ENCODE measurements at regions of chr15 and their contacts with region 1.

Region 1: DNA sequence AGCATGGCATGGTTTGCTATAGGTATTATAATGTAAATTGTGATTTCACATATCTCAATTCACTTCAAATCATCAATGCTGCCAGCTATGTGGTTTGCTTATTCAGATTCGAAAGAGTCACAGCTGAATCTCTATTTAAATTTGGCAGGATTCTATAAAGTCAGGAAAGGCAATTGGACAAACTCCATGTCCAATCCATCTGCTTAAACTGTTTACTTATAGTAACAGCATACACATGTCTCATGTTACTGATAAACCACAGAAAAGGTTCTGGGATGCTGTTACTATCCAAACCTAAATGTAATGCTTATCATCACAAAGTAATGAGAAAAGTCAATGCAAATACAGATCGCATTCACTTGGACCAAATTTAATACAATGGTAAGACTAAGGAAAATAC is 229.7 kb downstream of the ISL2 start:
- DNase-seq: no peak
- ATAC-seq: no peak
- H3K4me3 ChIP-seq: no peak overlapping the region
- H3K4me3 Mint-ChIP-seq: no peak overlapping the region
- H3K27ac ChIP-seq: no peak overlapping the region
- H3K27ac Mint-ChIP-seq: no peak overlapping the region
- H3K4me1 ChIP-seq: no peaks in the 10 kb centered on the region
- H3K4me1 Mint-ChIP-seq: no peaks in the 10 kb centered on the region
- H3K27me3 ChIP-seq: no peaks in the 10 kb centered on the region
- H3K27me3 Mint-ChIP-seq: no peaks in the 10 kb centered on the region

Region 2: DNA sequence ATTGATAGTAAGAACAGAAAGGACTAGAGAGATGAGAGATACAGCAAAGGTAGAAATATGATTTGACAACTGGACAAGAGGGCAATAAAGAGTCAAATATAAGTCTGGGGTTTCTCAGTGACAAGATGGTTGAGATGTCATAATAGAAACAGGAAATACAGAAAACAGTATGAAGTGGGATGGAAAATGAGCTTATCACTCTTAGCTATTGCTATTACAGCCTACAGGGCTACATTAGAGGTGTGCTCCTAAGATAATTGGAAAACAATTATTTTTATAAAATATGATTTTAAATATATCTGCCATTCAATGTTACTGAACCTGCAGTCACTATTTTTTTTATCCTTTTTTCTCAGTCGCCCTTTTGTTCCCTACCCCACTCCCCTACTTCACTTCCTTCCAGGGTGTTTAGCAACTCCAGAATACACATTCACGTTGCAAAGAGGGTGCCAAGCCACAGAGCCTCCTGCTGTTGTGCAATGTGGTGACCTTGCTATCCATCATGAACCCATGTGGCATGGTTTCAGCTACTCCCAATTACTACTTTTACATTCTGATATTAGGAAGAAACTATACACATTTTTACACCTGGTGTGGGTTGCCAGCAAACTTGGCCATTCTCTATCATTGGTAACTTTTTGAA is 560.0 kb before region 1 on chr15:
- CTCF ChIA-PET with region 1: no interaction called
- POLR2A ChIA-PET with region 1: no interaction called
- intact Hi-C with region 1: loop called in 1 of 2 experiments (anchors 10 kb)
- DNase-seq: no peak
- ATAC-seq: peak; percentile 49
- H3K4me3 ChIP-seq: no peak overlapping the region
- H3K4me3 Mint-ChIP-seq: peak overlapping the region in 1 of 10 donors; percentile 63
- H3K27ac ChIP-seq: no peak overlapping the region
- H3K27ac Mint-ChIP-seq: no peak overlapping the region
- H3K4me1 ChIP-seq: no peaks in the 10 kb centered on the region
- H3K4me1 Mint-ChIP-seq: peaks cover 0 to 5% (median 0%) of the 10 kb centered on the region in 7 donors
- H3K27me3 ChIP-seq: no peaks in the 10 kb centered on the region
- H3K27me3 Mint-ChIP-seq: peaks cover 29 to 48% (median 38%) of the 10 kb centered on the region in 5 donors

Region 3: DNA sequence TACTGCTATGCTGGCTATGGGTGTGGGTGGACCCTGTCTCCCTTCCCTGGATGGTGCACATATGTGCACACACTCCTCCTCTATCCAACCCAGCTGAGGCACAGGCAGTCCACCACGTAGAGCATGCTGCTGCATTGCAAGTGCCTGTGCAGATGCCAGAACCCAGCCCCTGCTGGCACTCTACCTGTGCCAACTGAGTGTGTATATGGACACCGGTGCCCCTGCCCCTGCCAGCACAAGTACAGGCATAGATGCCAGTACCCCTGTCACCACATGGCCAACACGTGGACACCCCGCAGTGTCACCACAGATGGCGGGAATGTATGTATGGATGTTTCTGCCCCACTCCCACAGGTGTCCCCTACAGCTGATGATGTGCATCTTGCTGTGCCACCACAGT is 13.2 kb before region 1 on chr15:
- CTCF ChIA-PET with region 1: no interaction called
- POLR2A ChIA-PET with region 1: no interaction called
- intact Hi-C with region 1: no loop called
- DNase-seq: no peak
- ATAC-seq: no peak
- H3K4me3 ChIP-seq: no peak overlapping the region
- H3K4me3 Mint-ChIP-seq: peak overlapping the region in 1 of 10 donors; percentile 33
- H3K27ac ChIP-seq: no peak overlapping the region
- H3K27ac Mint-ChIP-seq: no peak overlapping the region
- H3K4me1 ChIP-seq: peaks cover 0 to 4% of the 10 kb centered on the region in 2 donors
- H3K4me1 Mint-ChIP-seq: peaks cover 8 to 41% (median 33%) of the 10 kb centered on the region in 7 donors
- H3K27me3 ChIP-seq: no peaks in the 10 kb centered on the region
- H3K27me3 Mint-ChIP-seq: no peaks in the 10 kb centered on the region